Activated CD4-positive, alpha-beta T cell treated with anti-CD3 and anti-CD28 coated beads, Interleukin-2, amount 10 ng/mL, durations not matched to agents 24 days and 14 days (primary cell): ENCODE measurements at regions of chr16 and their contacts with region 1.

Region 1: GRCh38 chr16:56608043-56608875 is at the start of gene MT2A:
- DNase-seq: peak; percentile 98
- H3K4me3 Mint-ChIP-seq: peak within 1 kb of the TSS; percentile 96
- H3K27ac Mint-ChIP-seq: peak within 1 kb of the TSS; percentile 98
- H3K4me1 Mint-ChIP-seq: peaks cover 52% of the 10 kb centered on the region
- H3K27me3 Mint-ChIP-seq: no peaks in the 10 kb centered on the region
- total RNA-seq, gene MT2A: 465 TPM in 2 replicates

Region 2: DNA sequence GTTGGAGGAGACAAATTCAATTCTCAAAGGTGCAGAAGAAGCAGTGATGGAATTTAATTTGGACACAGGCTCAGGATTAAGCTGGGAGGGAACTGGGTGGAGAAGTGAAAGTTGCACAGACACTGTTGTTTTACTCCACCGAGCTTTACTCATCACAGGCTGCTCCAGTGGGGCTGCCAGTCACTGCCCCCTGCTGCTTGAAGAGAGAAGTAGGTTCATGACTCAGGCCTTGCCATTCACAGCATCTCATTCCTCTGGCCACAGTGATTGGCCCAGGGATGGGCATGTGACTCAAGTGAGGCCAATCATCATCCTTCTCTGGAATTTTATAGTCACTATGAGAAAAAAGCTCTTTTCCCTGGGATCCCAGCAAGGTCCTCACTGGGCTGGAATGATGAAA is 405.2 kb before region 1 on chr16:
- intact Hi-C with region 1: loop called (anchors 2 kb)
- DNase-seq: peak; percentile 84
- H3K4me3 Mint-ChIP-seq: no peak overlapping the region
- H3K27ac Mint-ChIP-seq: no peak overlapping the region
- H3K4me1 Mint-ChIP-seq: peaks cover 22% of the 10 kb centered on the region
- H3K27me3 Mint-ChIP-seq: peaks cover 24% of the 10 kb centered on the region

Region 3: DNA sequence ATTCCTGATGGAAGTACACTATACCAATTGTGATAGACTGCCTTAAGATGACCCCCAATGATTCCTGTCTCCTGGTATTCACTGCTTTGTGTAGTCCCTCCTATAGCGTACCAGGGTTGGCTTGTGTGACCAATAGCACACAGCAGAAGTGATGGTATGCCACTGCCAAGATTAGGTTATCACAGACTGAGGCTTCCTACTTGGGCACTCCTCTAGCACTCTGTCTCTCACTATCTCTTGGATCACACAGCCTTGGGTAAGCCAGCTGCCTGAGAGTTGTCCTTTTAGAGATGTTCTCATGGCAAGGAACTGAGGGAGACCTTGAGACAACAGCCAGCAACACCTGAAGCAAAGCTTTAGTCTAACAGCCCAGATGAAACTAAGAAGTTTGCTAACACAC is 170.2 kb before region 1 on chr16:
- intact Hi-C with region 1: no loop called
- DNase-seq: no peak
- H3K4me3 Mint-ChIP-seq: no peak overlapping the region
- H3K27ac Mint-ChIP-seq: no peak overlapping the region
- H3K4me1 Mint-ChIP-seq: peaks cover 10% of the 10 kb centered on the region
- H3K27me3 Mint-ChIP-seq: no peaks in the 10 kb centered on the region

Region 4: DNA sequence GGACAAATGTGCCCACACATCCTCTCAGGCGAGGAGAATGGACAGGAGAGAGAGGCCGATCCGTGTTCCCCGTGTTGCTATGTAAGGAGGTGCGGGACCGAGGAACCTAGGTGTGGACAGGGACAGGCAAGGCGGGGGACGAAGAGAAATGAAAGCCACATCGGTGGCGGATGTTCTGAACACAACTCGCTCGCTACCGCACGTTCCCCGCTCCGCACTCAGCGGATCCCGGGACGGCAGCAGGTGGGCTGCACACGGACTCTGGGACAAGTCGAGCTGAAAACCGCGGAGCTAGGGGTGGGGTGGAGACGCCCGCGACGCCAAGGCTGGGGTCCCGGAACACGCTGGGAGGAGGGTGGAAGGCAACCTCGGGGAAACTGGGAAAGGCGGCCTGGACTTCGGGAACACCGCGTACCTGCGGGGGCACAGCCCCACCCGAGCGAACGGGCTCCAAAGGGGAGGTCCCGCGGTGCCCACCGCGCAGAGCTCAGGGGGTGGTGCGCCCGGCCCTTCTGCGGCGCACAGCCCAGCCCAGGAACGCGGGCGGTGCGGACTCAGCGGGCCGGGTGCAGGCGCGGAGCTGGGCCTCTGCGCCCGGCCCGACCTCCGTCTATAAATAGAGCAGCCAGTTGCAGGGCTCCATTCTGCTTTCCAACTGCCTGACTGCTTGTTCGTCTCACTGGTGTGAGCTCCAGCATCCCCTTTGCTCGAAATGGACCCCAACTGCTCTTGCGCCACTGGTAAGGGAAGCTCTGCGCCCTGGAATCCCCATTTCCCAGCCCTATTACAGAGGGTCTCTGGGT is 17.1 kb after region 1 on chr16 and contains the start of gene MT1E:
- intact Hi-C with region 1: loop called (anchors 1 kb)
- DNase-seq: peak; percentile 94
- H3K4me3 Mint-ChIP-seq: peak within 1 kb of the TSS; percentile 90
- H3K27ac Mint-ChIP-seq: peak within 1 kb of the TSS; percentile 96
- H3K4me1 Mint-ChIP-seq: peaks cover 22% of the 10 kb centered on the region
- H3K27me3 Mint-ChIP-seq: peaks cover 7% of the 10 kb centered on the region
- total RNA-seq, gene MT1E: 136 and 152 TPM in 2 replicates

Region 5: DNA sequence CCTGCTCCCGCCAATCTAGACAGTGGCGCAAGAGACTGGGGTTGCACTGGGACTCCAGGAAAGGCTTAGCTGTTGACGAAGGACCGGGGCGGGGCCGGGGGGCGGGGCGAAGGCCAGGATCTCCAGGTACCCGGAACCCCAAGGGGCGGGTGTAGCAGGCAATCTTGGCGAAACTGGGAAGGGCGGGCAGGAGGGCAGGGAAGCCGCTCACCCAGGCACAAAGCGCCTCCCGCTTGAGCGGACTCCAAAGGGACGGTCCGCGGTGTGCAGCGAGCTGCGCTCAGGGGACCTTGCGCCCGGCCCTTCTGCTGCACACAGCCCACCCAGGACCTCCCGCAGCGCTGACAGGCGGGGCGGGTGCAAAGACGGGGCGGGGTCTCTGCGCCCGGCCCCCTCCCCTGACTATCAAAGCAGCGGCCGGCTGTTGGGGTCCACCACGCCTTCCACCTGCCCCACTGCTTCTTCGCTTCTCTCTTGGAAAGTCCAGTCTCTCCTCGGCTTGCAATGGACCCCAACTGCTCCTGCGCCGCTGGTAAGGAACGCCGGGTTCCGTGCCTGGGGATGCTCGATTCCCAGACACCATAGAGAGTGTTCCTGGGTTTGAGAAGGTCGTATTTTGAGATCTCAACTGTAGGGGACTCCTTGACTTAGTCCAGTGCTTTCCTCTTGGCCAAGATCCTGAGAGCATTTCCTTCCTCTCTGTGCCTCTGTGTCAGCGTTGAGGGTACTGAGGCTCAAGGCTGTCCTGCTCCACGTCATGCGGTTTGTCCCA is 49.5 kb after region 1 on chr16 and contains the start of gene MT1F:
- intact Hi-C with region 1: loop called (anchors 1 kb)
- DNase-seq: peak; percentile 87
- H3K4me3 Mint-ChIP-seq: peak within 1 kb of the TSS; percentile 92
- H3K27ac Mint-ChIP-seq: peak within 1 kb of the TSS; percentile 85
- H3K4me1 Mint-ChIP-seq: peaks cover 18% of the 10 kb centered on the region
- H3K27me3 Mint-ChIP-seq: peaks cover 14% of the 10 kb centered on the region
- total RNA-seq, gene MT1F: 4.2 and 6.7 TPM in 2 replicates

Region 6: GRCh38 chr16:56938422-56939156 is 330.3 kb after region 1 on chr16:
- intact Hi-C with region 1: loop called (anchors 5 kb)
- DNase-seq: peak; percentile 83
- H3K4me3 Mint-ChIP-seq: peak overlapping the region; percentile 83
- H3K27ac Mint-ChIP-seq: peak overlapping the region; percentile 94
- H3K4me1 Mint-ChIP-seq: peaks cover 75% of the 10 kb centered on the region
- H3K27me3 Mint-ChIP-seq: no peaks in the 10 kb centered on the region

Region 7: GRCh38 chr16:57013229-57013628 is 405.0 kb after region 1 on chr16:
- intact Hi-C with region 1: loop called (anchors 1 kb)
- DNase-seq: no peak
- H3K4me3 Mint-ChIP-seq: peak overlapping the region; percentile 79
- H3K27ac Mint-ChIP-seq: peak overlapping the region; percentile 98
- H3K4me1 Mint-ChIP-seq: peaks cover 66% of the 10 kb centered on the region
- H3K27me3 Mint-ChIP-seq: no peaks in the 10 kb centered on the region

Region 8: DNA sequence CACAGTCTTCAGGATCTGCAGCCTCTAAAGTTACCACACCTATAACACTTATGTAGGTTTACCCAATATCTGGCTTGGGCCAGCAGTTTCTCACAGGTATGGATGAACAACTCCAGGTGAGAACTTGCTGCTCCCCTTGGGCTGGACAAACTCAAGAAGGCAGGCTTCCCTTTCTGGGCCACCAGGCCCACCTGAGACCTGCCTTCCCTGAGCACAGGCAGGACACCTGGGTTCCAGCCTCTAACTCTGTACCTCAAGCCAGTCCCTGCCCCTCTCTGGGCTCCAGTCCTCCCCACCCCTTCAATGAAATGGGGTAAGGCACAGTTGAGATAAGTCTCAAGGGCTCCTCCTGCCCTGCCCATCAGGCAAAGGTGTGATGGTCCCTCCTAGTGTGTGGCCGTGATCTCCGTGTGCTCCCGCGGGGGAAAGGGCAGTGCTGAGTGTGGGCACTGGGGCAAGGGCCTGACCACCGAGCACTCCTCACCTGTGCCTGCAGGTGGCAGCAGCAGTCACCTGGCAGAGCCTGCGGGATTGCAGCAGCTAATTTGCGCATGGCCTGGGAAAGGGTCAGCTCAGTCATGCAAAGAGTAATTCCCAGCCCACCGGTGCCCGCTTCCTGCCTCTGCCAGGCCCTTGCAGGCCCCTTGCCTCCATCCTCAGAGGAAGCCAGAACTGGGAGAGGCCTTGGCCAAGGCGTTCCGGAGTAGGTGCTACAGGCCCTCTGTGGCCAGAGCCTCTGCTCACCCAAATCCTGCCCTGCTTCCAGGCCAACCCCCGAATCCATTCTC is 992.0 kb after region 1 on chr16:
- intact Hi-C with region 1: loop called (anchors 10 kb)
- DNase-seq: peak; percentile 80
- H3K4me3 Mint-ChIP-seq: no peak overlapping the region
- H3K27ac Mint-ChIP-seq: peak overlapping the region; percentile 95
- H3K4me1 Mint-ChIP-seq: peaks cover 41% of the 10 kb centered on the region
- H3K27me3 Mint-ChIP-seq: peaks cover 3% of the 10 kb centered on the region